CD8-positive, alpha-beta T cell (primary cell): ENCODE measurements at regions of chr6 and their contacts with region 1.

Region 1: GRCh38 chr6:134574491-134574890 is 256.6 kb upstream of the SGK1 start:
- DNase-seq: no peak
- ATAC-seq: no peak
- H3K4me3 ChIP-seq: no peak overlapping the region
- H3K4me3 Mint-ChIP-seq: no peak overlapping the region
- H3K27ac ChIP-seq: no peak overlapping the region
- H3K27ac Mint-ChIP-seq: no peak overlapping the region
- H3K4me1 ChIP-seq: peaks cover 7% of the 10 kb centered on the region
- H3K4me1 Mint-ChIP-seq: peaks cover 9% of the 10 kb centered on the region
- H3K27me3 ChIP-seq: no peaks in the 10 kb centered on the region
- H3K27me3 Mint-ChIP-seq: no peaks in the 10 kb centered on the region
- CTCF ChIP-seq: no peak

Region 2: GRCh38 chr6:134502614-134503549 is 71.6 kb before region 1 on chr6:
- CTCF ChIA-PET with region 1: no interaction called
- POLR2A ChIA-PET with region 1: no interaction called
- intact Hi-C with region 1: no loop called
- DNase-seq: no peak
- ATAC-seq: no peak
- H3K4me3 ChIP-seq: no peak overlapping the region
- H3K4me3 Mint-ChIP-seq: no peak overlapping the region
- H3K27ac ChIP-seq: no peak overlapping the region
- H3K27ac Mint-ChIP-seq: no peak overlapping the region
- H3K4me1 ChIP-seq: no peaks in the 10 kb centered on the region
- H3K4me1 Mint-ChIP-seq: no peaks in the 10 kb centered on the region
- H3K27me3 ChIP-seq: no peaks in the 10 kb centered on the region
- H3K27me3 Mint-ChIP-seq: no peaks in the 10 kb centered on the region
- CTCF ChIP-seq: no peak

Region 3: GRCh38 chr6:134517145-134517658 is 57.3 kb before region 1 on chr6:
- CTCF ChIA-PET with region 1: no interaction called
- POLR2A ChIA-PET with region 1: no interaction called
- intact Hi-C with region 1: loop called in 1 of 2 experiments (anchors 5 kb)
- DNase-seq: peak in 1 of 9 experiments; percentile 37
- ATAC-seq: no peak
- H3K4me3 ChIP-seq: no peak overlapping the region
- H3K4me3 Mint-ChIP-seq: no peak overlapping the region
- H3K27ac ChIP-seq: no peak overlapping the region
- H3K27ac Mint-ChIP-seq: no peak overlapping the region
- H3K4me1 ChIP-seq: peaks cover 17% of the 10 kb centered on the region
- H3K4me1 Mint-ChIP-seq: peaks cover 28% of the 10 kb centered on the region
- H3K27me3 ChIP-seq: no peaks in the 10 kb centered on the region
- H3K27me3 Mint-ChIP-seq: no peaks in the 10 kb centered on the region
- CTCF ChIP-seq: no peak

Region 4: DNA sequence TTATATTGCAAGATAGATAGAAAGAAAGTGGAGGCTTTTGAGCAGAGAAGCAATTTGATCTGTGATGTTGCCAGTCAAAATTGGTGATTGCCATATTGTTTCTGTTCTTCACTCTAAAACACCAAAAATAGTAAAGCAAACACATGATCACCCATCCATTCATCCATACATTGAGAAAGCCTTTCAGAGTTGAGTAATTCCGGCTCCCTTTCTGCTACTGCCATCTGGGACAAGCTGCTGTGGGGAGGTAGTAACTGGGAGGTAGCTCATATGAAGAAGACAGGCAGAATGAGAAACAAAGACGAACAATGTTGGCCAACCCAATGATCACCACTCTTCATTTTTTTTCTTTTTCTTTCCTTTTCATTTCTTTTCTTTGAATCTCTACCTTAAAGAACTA is 531.2 kb after region 1 on chr6:
- CTCF ChIA-PET with region 1: no interaction called
- POLR2A ChIA-PET with region 1: no interaction called
- intact Hi-C with region 1: no loop called
- DNase-seq: no peak
- ATAC-seq: no peak
- H3K4me3 ChIP-seq: no peak overlapping the region
- H3K4me3 Mint-ChIP-seq: no peak overlapping the region
- H3K27ac ChIP-seq: no peak overlapping the region
- H3K27ac Mint-ChIP-seq: peak overlapping the region; percentile 86
- H3K4me1 ChIP-seq: peaks cover 39% of the 10 kb centered on the region
- H3K4me1 Mint-ChIP-seq: peaks cover 64% of the 10 kb centered on the region
- H3K27me3 ChIP-seq: no peaks in the 10 kb centered on the region
- H3K27me3 Mint-ChIP-seq: no peaks in the 10 kb centered on the region
- CTCF ChIP-seq: no peak